T-cell (primary cell): ENCODE measurements at regions of chr12 and their contacts with region 1.

Region 1: GRCh38 chr12:12474931-12475795 is 87.5 kb downstream of the DUSP16 start:
- DNase-seq: peak in 32 of 35 experiments; percentile 22 to 75 (median 50)
- ATAC-seq: peak; percentile 68 to 82 (median 80)
- H3K4me3 ChIP-seq: peak overlapping the region in 1 of 2 donors; percentile 25
- H3K4me3 Mint-ChIP-seq: peak overlapping the region; percentile 22 to 53 (median 44)
- H3K27ac ChIP-seq: peak overlapping the region; percentile 84
- H3K27ac Mint-ChIP-seq: peak overlapping the region; percentile 93 to 96
- H3K4me1 ChIP-seq: peaks cover 2 to 27% of the 10 kb centered on the region in 2 experiments
- H3K4me1 Mint-ChIP-seq: peaks cover 37 to 82% (median 75%) of the 10 kb centered on the region in 3 donors
- H3K27me3 ChIP-seq: no peaks in the 10 kb centered on the region
- H3K27me3 Mint-ChIP-seq: no peaks in the 10 kb centered on the region

Region 2: GRCh38 chr12:12384571-12385340 is 90.4 kb before region 1 on chr12:
- CTCF ChIA-PET with region 1: interaction called in 1 of 2 experiments, 9 read pairs
- POLR2A ChIA-PET with region 1: interaction called, 4 to 15 read pairs
- DNase-seq: peak in 25 of 35 experiments; percentile 9 to 60 (median 26)
- ATAC-seq: peak in 3 of 4 experiments; percentile 34 to 65 (median 45)
- H3K4me3 ChIP-seq: no peak overlapping the region
- H3K4me3 Mint-ChIP-seq: peak overlapping the region; percentile 28 to 51 (median 40)
- H3K27ac ChIP-seq: peak overlapping the region; percentile 83
- H3K27ac Mint-ChIP-seq: peak overlapping the region; percentile 94 to 95
- H3K4me1 ChIP-seq: peaks cover 10 to 55% of the 10 kb centered on the region in 2 experiments
- H3K4me1 Mint-ChIP-seq: peaks cover 25 to 79% (median 75%) of the 10 kb centered on the region in 3 donors
- H3K27me3 ChIP-seq: no peaks in the 10 kb centered on the region
- H3K27me3 Mint-ChIP-seq: no peaks in the 10 kb centered on the region

Region 3: GRCh38 chr12:12398026-12398859 is 76.9 kb before region 1 on chr12:
- CTCF ChIA-PET with region 1: no interaction called
- POLR2A ChIA-PET with region 1: no interaction called
- DNase-seq: no peak
- ATAC-seq: no peak
- H3K4me3 ChIP-seq: no peak overlapping the region
- H3K4me3 Mint-ChIP-seq: no peak overlapping the region
- H3K27ac ChIP-seq: no peak overlapping the region
- H3K27ac Mint-ChIP-seq: peak overlapping the region in 1 of 2 donors; percentile 28
- H3K4me1 ChIP-seq: peaks cover 0 to 4% of the 10 kb centered on the region in 2 experiments
- H3K4me1 Mint-ChIP-seq: peaks cover 28 to 60% (median 59%) of the 10 kb centered on the region in 3 donors
- H3K27me3 ChIP-seq: no peaks in the 10 kb centered on the region
- H3K27me3 Mint-ChIP-seq: no peaks in the 10 kb centered on the region

Region 4: DNA sequence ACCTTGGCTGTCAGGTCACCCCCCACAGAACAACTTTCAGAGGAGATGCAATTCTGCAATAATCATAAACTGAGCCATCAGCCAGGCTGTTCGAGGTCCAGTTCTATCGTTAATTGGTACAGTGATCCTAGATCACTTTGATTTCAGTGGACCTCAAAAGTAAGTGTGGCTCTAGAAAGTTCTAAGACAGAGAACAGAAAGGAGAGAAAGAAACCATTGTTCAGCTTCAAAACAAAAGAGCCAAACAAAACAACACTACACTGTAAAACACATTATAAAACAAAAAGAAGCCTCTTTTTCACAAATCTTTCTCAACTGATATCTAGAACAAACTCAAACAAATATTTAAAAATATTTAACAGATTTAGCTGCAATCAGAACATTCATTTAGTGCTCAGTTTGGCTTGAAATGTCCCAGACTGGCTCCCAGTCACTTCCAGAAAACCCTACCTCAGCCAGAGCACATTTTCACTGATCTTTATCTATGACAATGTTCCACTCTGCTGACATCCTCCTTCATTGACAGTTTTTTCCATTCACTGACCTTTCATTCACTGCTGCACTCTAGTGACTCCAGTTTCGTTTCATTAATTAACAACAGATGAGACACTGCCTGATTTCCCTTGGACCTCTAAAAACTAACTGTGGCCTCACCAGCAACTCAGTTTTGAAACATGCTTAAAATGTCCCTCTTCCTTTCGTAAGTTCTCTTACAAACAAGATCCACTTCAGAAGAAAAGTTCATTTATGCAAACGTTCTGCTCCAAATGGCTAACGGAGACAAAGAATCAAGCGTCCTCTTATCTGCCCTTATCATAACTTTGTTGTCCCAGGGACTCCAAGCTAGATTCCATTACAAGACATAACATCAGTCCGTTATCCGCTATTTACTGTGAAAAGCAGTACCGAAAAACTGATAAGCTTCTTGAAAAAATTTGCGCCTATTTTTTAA is 30.7 kb after region 1 on chr12:
- CTCF ChIA-PET with region 1: interaction called in 1 of 2 experiments, 15 read pairs
- POLR2A ChIA-PET with region 1: interaction called in 1 of 2 experiments, 5 read pairs
- DNase-seq: no peak
- ATAC-seq: peak in 1 of 4 experiments; percentile 43
- H3K4me3 ChIP-seq: no peak overlapping the region
- H3K4me3 Mint-ChIP-seq: peak overlapping the region; percentile 30 to 52 (median 42)
- H3K27ac ChIP-seq: no peak overlapping the region
- H3K27ac Mint-ChIP-seq: peak overlapping the region; percentile 70 to 84
- H3K4me1 ChIP-seq: peaks cover 0 to 22% of the 10 kb centered on the region in 2 experiments
- H3K4me1 Mint-ChIP-seq: peaks cover 38 to 79% (median 48%) of the 10 kb centered on the region in 3 donors
- H3K27me3 ChIP-seq: no peaks in the 10 kb centered on the region
- H3K27me3 Mint-ChIP-seq: no peaks in the 10 kb centered on the region

Region 5: DNA sequence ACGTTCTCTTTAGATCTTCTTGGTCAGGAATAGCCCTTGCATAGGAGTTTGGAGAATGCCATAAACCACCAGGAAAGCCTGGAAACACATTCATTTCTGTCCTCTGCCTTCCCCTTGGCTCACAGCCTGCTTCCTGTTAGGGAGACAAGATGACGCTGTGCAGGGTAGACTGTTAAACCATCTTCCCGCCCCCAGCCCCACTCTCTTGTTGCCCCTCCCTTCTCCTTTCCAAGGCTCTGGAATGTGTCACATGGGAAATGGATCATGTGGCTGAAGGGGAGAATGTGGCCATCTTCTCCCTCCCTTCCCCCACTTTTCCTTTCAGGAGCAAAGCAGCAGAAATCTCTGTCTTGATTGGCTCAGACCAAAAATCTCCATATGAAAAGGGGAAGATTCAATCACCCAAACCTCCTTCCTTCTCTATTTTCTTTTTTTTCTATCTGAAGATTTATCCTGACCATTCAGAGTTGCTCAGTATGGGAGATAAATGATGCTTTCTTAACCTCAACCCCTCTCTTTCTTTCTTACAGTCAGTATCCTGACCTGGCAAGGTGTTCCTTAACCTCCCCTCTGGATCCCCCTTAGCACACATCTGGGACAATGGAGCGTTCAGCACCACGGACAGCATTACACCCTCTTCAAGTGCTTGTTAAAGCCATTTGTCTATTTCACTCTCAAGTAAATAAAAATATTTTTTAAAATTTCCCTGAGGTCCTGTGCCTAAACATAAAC is 209.4 kb after region 1 on chr12:
- CTCF ChIA-PET with region 1: no interaction called
- POLR2A ChIA-PET with region 1: no interaction called
- DNase-seq: peak in 2 of 35 experiments; percentile 6 to 22
- ATAC-seq: no peak
- H3K4me3 ChIP-seq: no peak overlapping the region
- H3K4me3 Mint-ChIP-seq: no peak overlapping the region
- H3K27ac ChIP-seq: no peak overlapping the region
- H3K27ac Mint-ChIP-seq: no peak overlapping the region
- H3K4me1 ChIP-seq: peaks cover 0 to under 1% of the 10 kb centered on the region in 2 experiments
- H3K4me1 Mint-ChIP-seq: peaks cover 4 to 5% (median 4%) of the 10 kb centered on the region in 3 donors
- H3K27me3 ChIP-seq: no peaks in the 10 kb centered on the region
- H3K27me3 Mint-ChIP-seq: no peaks in the 10 kb centered on the region